Activated T-helper 2 cell treated with anti-CD3 and anti-CD28 coated beads, Interferon-gamma antibody, Interleukin-2, Interleukin-4, amounts not matched to agents 10 μg/mL and 5 μg/mL and 100 μg/mL, durations not matched to agents 14 hours and 24 hours and 36 hours (primary cell): ENCODE measurements at regions of chr11 and their contacts with region 1.

Region 1: GRCh38 chr11:122981388-122982264 is at the start of gene BSX:
- DNase-seq: peak; percentile 40
- H3K4me3 Mint-ChIP-seq: no peak within 1 kb of the TSS
- H3K27ac Mint-ChIP-seq: no peak within 1 kb of the TSS
- H3K4me1 Mint-ChIP-seq: peaks cover 10% of the 10 kb centered on the region
- H3K27me3 Mint-ChIP-seq: peaks cover 89% of the 10 kb centered on the region
- total RNA-seq, gene BSX: not detected in 2 replicates

Region 2: GRCh38 chr11:122882857-122883645 is 98.6 kb before region 1 on chr11:
- intact Hi-C with region 1: loop called (anchors 5 kb)
- DNase-seq: peak; percentile 33
- H3K4me3 Mint-ChIP-seq: peak overlapping the region; percentile 79
- H3K27ac Mint-ChIP-seq: peak overlapping the region; percentile 62
- H3K4me1 Mint-ChIP-seq: peaks cover 16% of the 10 kb centered on the region
- H3K27me3 Mint-ChIP-seq: peaks cover 24% of the 10 kb centered on the region

Region 3: GRCh38 chr11:123054301-123055065 is 72.9 kb after region 1 on chr11:
- intact Hi-C with region 1: loop called (anchors 2 kb)
- DNase-seq: no peak
- H3K4me3 Mint-ChIP-seq: no peak overlapping the region
- H3K27ac Mint-ChIP-seq: peak overlapping the region; percentile 55
- H3K4me1 Mint-ChIP-seq: peaks cover 40% of the 10 kb centered on the region
- H3K27me3 Mint-ChIP-seq: no peaks in the 10 kb centered on the region

Region 4: DNA sequence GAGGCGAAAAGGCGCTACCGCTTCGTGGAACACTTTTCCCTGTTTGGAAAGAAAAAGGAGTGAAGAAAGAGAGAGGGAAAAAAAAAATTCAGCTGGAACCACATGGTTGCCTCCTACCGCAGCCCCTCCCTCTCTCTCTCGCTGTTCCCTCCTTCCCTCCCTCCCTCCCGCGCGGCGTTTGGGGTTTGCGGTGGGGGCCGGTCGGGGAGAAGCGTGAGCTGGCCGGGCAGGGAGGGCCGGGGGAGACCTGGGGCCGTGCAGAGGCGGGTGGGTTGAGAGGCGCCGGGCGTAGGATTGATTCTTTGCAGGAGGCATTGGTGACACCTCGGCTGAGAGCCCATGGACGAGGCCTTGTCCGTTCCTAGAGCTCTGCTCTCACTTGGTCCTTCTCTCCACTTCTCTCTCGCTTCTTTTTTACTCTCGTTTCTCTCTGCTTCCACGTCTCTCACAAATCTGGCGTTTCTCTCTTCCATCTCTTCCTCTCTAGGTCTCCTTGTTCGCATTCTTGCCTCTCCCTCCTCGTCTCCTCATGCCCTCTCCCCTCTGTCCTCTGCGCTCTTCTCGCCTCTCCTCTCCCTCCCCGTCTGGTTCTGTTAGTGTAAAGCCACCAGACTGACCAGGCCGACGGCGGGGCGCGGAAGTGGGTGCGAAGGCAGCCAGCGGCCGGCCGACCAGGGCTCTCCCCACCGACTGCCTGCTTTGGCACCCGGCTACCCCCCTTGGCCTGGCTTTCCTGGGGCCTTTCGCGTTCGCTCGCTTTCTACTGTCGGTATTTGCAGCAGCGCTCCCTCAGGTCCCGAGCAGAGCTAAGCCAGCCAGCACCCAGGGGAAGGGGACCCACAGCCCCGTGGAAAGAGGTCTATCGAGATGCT is 213.8 kb after region 1 on chr11 and contains the start of gene CLMP:
- intact Hi-C with region 1: loop called (anchors 10 kb)
- DNase-seq: no peak
- H3K4me3 Mint-ChIP-seq: peak within 1 kb of the TSS; percentile 2
- H3K27ac Mint-ChIP-seq: no peak within 1 kb of the TSS
- H3K4me1 Mint-ChIP-seq: peaks cover 9% of the 10 kb centered on the region
- H3K27me3 Mint-ChIP-seq: peaks cover 72% of the 10 kb centered on the region
- total RNA-seq, gene CLMP: 0.05 and 0.11 TPM in 2 replicates

Region 5: GRCh38 chr11:124865921-124866583 is 1884.4 kb after region 1 on chr11:
- intact Hi-C with region 1: loop called (anchors 10 kb)
- DNase-seq: peak; percentile 41
- H3K4me3 Mint-ChIP-seq: no peak overlapping the region
- H3K27ac Mint-ChIP-seq: no peak overlapping the region
- H3K4me1 Mint-ChIP-seq: peaks cover 9% of the 10 kb centered on the region
- H3K27me3 Mint-ChIP-seq: peaks cover 93% of the 10 kb centered on the region